ENCODE measurements at regions of chr19 and their contacts with region 1.

Region 1: GRCh38 chr19:48899781-48900476 is at the start of gene NUCB1:
- DNase-seq: peak; percentile 100
- H3K4me3 ChIP-seq: peak within 1 kb of the TSS; percentile 76
- H3K4me3 Mint-ChIP-seq: peak within 1 kb of the TSS; percentile 92
- H3K27ac Mint-ChIP-seq: peak within 1 kb of the TSS; percentile 89
- H3K4me1 ChIP-seq: 0 out of 2 replicates have a peak, but pooled peaks cover 13% of the 10 kb centered on the region
- H3K4me1 Mint-ChIP-seq: peaks cover 13% of the 10 kb centered on the region
- H3K27me3 ChIP-seq: no peaks in the 10 kb centered on the region
- H3K27me3 Mint-ChIP-seq: no peaks in the 10 kb centered on the region
- CTCF ChIP-seq: peak in 1 of 2 experiments; percentile 38
- total RNA-seq, gene NUCB1: 140 and 142 TPM in 2 replicates

Region 2: GRCh38 chr19:48858984-48859710 is 40.8 kb before region 1 on chr19:
- CTCF ChIA-PET with region 1: no interaction called
- POLR2A ChIA-PET with region 1: no interaction called
- intact Hi-C with region 1: no loop called
- DNase-seq: no peak
- H3K4me3 ChIP-seq: no peak overlapping the region
- H3K4me3 Mint-ChIP-seq: no peak overlapping the region
- H3K27ac Mint-ChIP-seq: no peak overlapping the region
- H3K4me1 ChIP-seq: peaks cover 3% of the 10 kb centered on the region
- H3K4me1 Mint-ChIP-seq: no peaks in the 10 kb centered on the region
- H3K27me3 ChIP-seq: no peaks in the 10 kb centered on the region
- H3K27me3 Mint-ChIP-seq: no peaks in the 10 kb centered on the region
- CTCF ChIP-seq: no peak

Region 3: GRCh38 chr19:48872182-48872883 is 27.6 kb before region 1 on chr19 and contains the start of gene PPP1R15A:
- CTCF ChIA-PET with region 1: no interaction called
- POLR2A ChIA-PET with region 1: interaction called, 11 read pairs
- intact Hi-C with region 1: loop called (anchors 1 kb)
- DNase-seq: peak; percentile 99
- H3K4me3 ChIP-seq: peak within 1 kb of the TSS; percentile 99
- H3K4me3 Mint-ChIP-seq: peak within 1 kb of the TSS; percentile 99
- H3K27ac Mint-ChIP-seq: peak within 1 kb of the TSS; percentile 100
- H3K4me1 ChIP-seq: peaks cover 56% of the 10 kb centered on the region
- H3K4me1 Mint-ChIP-seq: peaks cover 49% of the 10 kb centered on the region
- H3K27me3 ChIP-seq: no peaks in the 10 kb centered on the region
- H3K27me3 Mint-ChIP-seq: peaks cover 3% of the 10 kb centered on the region
- CTCF ChIP-seq: no peak
- total RNA-seq, gene PPP1R15A: 83.3 and 94.7 TPM in 2 replicates

Region 4: DNA sequence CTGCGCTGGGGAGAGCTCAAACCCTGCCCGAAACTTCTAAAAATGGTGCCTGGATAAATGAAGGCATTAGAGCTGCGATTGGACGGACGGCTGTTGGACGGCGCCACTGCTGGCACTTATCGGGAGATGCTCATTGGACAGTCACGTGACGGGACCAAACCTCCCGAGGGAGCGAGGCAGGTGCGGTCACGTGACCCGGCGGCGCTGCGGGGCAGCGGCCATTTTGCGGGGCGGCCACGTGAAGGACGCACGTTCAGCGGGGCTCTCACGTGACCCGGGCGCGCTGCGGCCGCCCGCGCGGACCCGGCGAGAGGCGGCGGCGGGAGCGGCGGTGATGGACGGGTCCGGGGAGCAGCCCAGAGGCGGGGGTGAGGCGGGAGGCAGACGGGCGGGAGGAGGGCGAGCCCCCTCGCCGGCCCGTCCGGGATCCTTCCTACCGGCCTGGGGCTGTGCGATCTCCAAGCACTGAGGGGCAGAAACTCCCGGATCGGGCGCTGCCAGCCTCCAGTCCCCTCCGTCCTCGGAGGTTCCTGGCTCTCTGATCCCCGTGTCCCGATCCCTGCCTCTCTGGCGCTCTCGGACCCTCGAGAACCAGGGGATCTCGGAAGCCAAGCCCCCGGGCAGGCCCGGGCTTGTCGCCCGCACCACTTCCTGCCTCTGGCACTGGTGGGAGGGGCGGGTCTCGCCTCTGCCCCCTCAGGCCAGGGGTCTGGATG is 54.8 kb after region 1 on chr19 and contains the start of gene BAX:
- CTCF ChIA-PET with region 1: no interaction called
- POLR2A ChIA-PET with region 1: interaction called, 4 read pairs
- intact Hi-C with region 1: loop called (anchors 2 kb)
- DNase-seq: peak; percentile 99
- H3K4me3 ChIP-seq: peak within 1 kb of the TSS; percentile 70
- H3K4me3 Mint-ChIP-seq: peak within 1 kb of the TSS; percentile 85
- H3K27ac Mint-ChIP-seq: peak within 1 kb of the TSS; percentile 91
- H3K4me1 ChIP-seq: peaks cover 8% of the 10 kb centered on the region
- H3K4me1 Mint-ChIP-seq: peaks cover 6% of the 10 kb centered on the region
- H3K27me3 ChIP-seq: no peaks in the 10 kb centered on the region
- H3K27me3 Mint-ChIP-seq: no peaks in the 10 kb centered on the region
- CTCF ChIP-seq: peak in 1 of 2 experiments; percentile 14
- total RNA-seq, gene BAX: 107 and 110 TPM in 2 replicates

Region 5: DNA sequence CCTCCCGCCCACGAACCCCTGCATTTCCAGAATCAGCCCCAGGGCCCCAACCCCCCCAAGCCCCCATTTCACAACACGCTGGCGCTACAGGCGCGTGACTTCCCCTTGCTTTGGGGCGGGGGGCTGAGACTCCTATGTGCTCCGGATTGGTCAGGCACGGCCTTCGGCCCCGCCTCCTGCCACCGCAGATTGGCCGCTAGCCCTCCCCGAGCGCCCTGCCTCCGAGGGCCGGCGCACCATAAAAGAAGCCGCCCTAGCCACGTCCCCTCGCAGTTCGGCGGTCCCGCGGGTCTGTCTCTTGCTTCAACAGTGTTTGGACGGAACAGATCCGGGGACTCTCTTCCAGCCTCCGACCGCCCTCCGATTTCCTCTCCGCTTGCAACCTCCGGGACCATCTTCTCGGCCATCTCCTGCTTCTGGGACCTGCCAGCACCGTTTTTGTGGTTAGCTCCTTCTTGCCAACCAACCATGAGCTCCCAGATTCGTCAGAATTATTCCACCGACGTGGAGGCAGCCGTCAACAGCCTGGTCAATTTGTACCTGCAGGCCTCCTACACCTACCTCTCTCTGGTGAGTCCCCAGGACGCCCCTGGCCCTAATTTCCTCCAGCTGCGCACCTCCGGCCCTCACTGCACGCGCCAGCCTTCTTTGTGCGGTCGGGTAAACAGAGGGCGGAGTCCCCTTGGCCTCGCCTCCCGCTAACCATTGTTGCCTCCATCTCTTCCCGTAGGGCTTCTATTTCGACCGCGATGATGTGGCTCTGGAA is 65.3 kb after region 1 on chr19 and contains the start of gene FTL:
- CTCF ChIA-PET with region 1: interaction called, 11 read pairs
- POLR2A ChIA-PET with region 1: interaction called, 16 read pairs
- intact Hi-C with region 1: loop called (anchors 1 kb)
- DNase-seq: peak; percentile 99
- H3K4me3 ChIP-seq: peak within 1 kb of the TSS; percentile 95
- H3K4me3 Mint-ChIP-seq: peak within 1 kb of the TSS; percentile 96
- H3K27ac Mint-ChIP-seq: peak within 1 kb of the TSS; percentile 96
- H3K4me1 ChIP-seq: peaks cover 31% of the 10 kb centered on the region
- H3K4me1 Mint-ChIP-seq: peaks cover 40% of the 10 kb centered on the region
- H3K27me3 ChIP-seq: no peaks in the 10 kb centered on the region
- H3K27me3 Mint-ChIP-seq: no peaks in the 10 kb centered on the region
- CTCF ChIP-seq: no peak
- total RNA-seq, gene FTL: 2,542 and 2,963 TPM in 2 replicates

Region 6: GRCh38 chr19:48970923-48971395 is 71.0 kb after region 1 on chr19:
- CTCF ChIA-PET with region 1: interaction called, 11 read pairs
- POLR2A ChIA-PET with region 1: interaction called, 5 read pairs
- intact Hi-C with region 1: no loop called
- DNase-seq: peak; percentile 73 to 79
- H3K4me3 ChIP-seq: no peak overlapping the region
- H3K4me3 Mint-ChIP-seq: no peak overlapping the region
- H3K27ac Mint-ChIP-seq: no peak overlapping the region
- H3K4me1 ChIP-seq: peaks cover 12% of the 10 kb centered on the region
- H3K4me1 Mint-ChIP-seq: peaks cover 6% of the 10 kb centered on the region
- H3K27me3 ChIP-seq: no peaks in the 10 kb centered on the region
- H3K27me3 Mint-ChIP-seq: no peaks in the 10 kb centered on the region
- CTCF ChIP-seq: peak; percentile 81 to 88

Measured in Caco-2 (cell line).